ENCODE measurements at regions of chr12 and their contacts with region 1.

Region 1: GRCh38 chr12:94101738-94102660 is 46.4 kb upstream of the PLXNC1 start:
- DNase-seq: peak; percentile 89
- ATAC-seq: peak; percentile 94
- H3K4me3 ChIP-seq: peak overlapping the region; percentile 62
- H3K27ac ChIP-seq: no peak overlapping the region
- H3K4me1 ChIP-seq: peaks cover 5% of the 10 kb centered on the region
- H3K27me3 ChIP-seq: no peaks in the 10 kb centered on the region
- CTCF ChIP-seq: peak; percentile 84

Region 2: DNA sequence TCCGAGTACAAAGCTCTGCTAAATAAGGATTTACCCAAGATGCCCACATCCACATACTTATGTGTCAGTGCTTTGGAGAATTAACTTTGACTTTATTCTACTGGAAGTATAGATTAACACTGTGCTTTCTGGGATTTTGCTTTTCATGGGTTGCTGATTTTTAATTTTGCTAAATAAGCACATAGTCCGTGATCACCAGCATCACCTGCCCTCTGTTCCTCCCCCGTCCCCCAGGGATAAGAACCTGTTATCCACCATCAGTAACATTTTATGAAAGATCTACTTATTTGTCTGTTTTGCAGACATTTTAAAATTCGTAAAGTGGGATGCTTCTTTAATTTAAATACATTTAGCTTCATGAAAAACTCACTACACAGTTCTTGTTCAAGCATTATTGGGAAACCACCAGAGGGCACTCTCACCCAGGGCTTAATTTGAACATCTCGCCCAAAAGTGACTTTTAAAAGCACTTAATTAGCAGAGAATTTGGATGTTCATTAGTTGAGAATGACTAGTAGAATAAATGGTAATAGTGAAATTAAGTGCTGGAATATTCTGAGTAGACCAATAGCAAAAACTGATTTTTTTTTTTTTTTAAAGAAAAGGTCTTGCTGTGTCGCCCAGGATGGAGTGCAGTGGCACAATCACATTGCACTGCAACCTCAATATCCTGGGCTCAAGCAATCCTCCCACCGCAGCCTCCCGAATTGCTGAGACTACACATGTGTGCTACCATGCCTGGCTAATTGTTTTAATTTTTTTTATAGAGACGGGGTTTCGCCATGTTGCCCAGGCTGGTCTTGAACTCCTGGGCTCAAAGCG is 599.0 kb before region 1 on chr12:
- intact Hi-C with region 1: loop called (anchors 5 kb)
- DNase-seq: no peak
- ATAC-seq: peak; percentile 61
- H3K4me3 ChIP-seq: no peak overlapping the region
- H3K27ac ChIP-seq: no peak overlapping the region
- H3K4me1 ChIP-seq: no peaks in the 10 kb centered on the region
- H3K27me3 ChIP-seq: no peaks in the 10 kb centered on the region
- CTCF ChIP-seq: peak; percentile 80